ENCODE measurements at regions of chr12 and their contacts with region 1.

Region 1: DNA sequence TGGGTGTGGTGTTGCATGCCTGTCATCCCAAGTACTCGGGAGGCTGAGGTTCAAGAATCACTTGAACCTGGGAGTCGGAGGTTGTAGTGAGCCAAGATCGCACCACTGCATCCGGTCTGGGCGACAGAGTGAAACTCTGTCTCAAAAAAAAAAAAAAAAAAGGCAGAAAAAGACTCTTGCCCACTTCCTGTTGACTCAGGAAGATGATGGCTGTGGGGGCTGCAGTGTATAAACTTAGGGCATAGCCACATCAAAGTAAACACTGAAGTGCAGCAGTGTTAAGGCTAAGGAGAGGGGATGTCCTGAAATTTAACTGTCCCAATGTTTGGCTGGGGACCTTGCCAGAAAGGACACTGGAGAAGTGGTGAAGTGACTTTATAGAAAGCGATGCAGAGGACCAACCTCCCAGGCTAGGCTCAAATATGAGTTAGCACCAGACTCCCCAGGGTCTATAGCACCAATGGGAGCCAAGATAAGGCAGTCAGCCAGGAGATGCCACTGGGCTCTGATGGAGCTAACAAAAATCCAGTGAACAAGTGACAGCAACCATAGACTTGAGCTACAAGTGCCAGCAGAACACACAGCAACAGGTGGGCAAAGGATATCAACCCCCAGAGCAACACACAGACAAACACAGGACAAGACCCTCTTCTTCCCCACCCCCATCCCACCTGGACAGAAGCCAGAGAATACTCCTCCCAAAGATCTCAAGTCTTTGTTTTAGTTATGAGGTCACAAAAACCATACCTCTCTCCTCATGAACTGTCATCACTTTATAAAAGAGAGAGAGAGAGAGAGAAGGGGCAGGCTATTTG is 28.0 kb downstream of the NELL2 start:
- DNase-seq: peak; percentile 79 to 88 (median 82)
- H3K4me3 ChIP-seq: peak overlapping the region in 1 of 2 donors; percentile 46
- H3K4me3 Mint-ChIP-seq: peak overlapping the region; percentile 67 to 86 (median 78)
- H3K27ac ChIP-seq: peak overlapping the region; percentile 62
- H3K27ac Mint-ChIP-seq: peak overlapping the region; percentile 92 to 100 (median 96)
- H3K4me1 ChIP-seq: peaks cover 88% of the 10 kb centered on the region
- H3K4me1 Mint-ChIP-seq: peaks cover 37 to 90% (median 59%) of the 10 kb centered on the region in 4 donors
- H3K27me3 ChIP-seq: no peaks in the 10 kb centered on the region
- H3K27me3 Mint-ChIP-seq: no peaks in the 10 kb centered on the region

Region 2: DNA sequence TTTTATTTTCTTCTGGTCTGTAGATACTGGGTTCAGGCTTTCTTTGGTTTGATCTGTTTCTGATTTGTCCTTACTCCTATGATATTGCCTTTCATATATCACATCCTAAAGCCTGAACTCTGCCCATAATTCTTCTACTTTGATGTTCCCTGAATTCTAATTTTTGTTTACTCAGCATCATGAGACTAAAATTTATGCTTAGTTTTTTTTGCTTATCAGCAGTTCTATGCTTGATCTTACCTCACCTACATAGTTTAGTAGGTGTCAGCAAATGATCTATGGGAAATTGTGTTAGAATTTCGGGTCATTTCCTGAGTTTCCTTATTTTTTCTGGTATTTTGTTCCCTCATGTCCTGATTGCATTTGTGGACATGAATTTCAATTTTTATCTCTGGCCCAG is 918.1 kb before region 1 on chr12:
- CTCF ChIA-PET with region 1: no interaction called
- POLR2A ChIA-PET with region 1: no interaction called
- intact Hi-C with region 1: no loop called
- DNase-seq: no peak
- H3K4me3 ChIP-seq: no peak overlapping the region
- H3K4me3 Mint-ChIP-seq: no peak overlapping the region
- H3K27ac ChIP-seq: no peak overlapping the region
- H3K27ac Mint-ChIP-seq: no peak overlapping the region
- H3K4me1 ChIP-seq: no peaks in the 10 kb centered on the region
- H3K4me1 Mint-ChIP-seq: no peaks in the 10 kb centered on the region
- H3K27me3 ChIP-seq: no peaks in the 10 kb centered on the region
- H3K27me3 Mint-ChIP-seq: no peaks in the 10 kb centered on the region

Region 3: GRCh38 chr12:44817687-44818086 is 30.4 kb before region 1 on chr12:
- CTCF ChIA-PET with region 1: interaction called, 14 read pairs
- POLR2A ChIA-PET with region 1: interaction called, 10 read pairs
- intact Hi-C with region 1: loop called (anchors 1 kb)
- DNase-seq: no peak
- H3K4me3 ChIP-seq: no peak overlapping the region
- H3K4me3 Mint-ChIP-seq: peak overlapping the region in 2 of 8 donors; percentile 6 to 8
- H3K27ac ChIP-seq: no peak overlapping the region
- H3K27ac Mint-ChIP-seq: peak overlapping the region in 5 of 7 donors; percentile 2 to 71 (median 28)
- H3K4me1 ChIP-seq: peaks cover 49% of the 10 kb centered on the region
- H3K4me1 Mint-ChIP-seq: peaks cover 15 to 76% (median 56%) of the 10 kb centered on the region in 4 donors
- H3K27me3 ChIP-seq: no peaks in the 10 kb centered on the region
- H3K27me3 Mint-ChIP-seq: no peaks in the 10 kb centered on the region

Region 4: GRCh38 chr12:44827832-44828438 is 20.2 kb before region 1 on chr12:
- CTCF ChIA-PET with region 1: interaction called, 15 read pairs
- POLR2A ChIA-PET with region 1: interaction called, 49 read pairs
- intact Hi-C with region 1: loop called (anchors 2 kb)
- DNase-seq: peak in 4 of 5 donors; percentile 65 to 80 (median 72)
- H3K4me3 ChIP-seq: peak overlapping the region; percentile 5 to 15
- H3K4me3 Mint-ChIP-seq: peak overlapping the region; percentile 64 to 85 (median 80)
- H3K27ac ChIP-seq: peak overlapping the region; percentile 44
- H3K27ac Mint-ChIP-seq: peak overlapping the region; percentile 81 to 96 (median 92)
- H3K4me1 ChIP-seq: peaks cover 55% of the 10 kb centered on the region
- H3K4me1 Mint-ChIP-seq: peaks cover 27 to 61% (median 46%) of the 10 kb centered on the region in 4 donors
- H3K27me3 ChIP-seq: no peaks in the 10 kb centered on the region
- H3K27me3 Mint-ChIP-seq: no peaks in the 10 kb centered on the region

Region 5: GRCh38 chr12:44835641-44836379 is 12.3 kb before region 1 on chr12:
- CTCF ChIA-PET with region 1: interaction called, 3 read pairs
- POLR2A ChIA-PET with region 1: interaction called, 49 read pairs
- intact Hi-C with region 1: loop called (anchors 1 kb)
- DNase-seq: peak in 2 of 5 donors; percentile 5 to 71
- H3K4me3 ChIP-seq: no peak overlapping the region
- H3K4me3 Mint-ChIP-seq: peak overlapping the region in 7 of 8 donors; percentile 1 to 74 (median 60)
- H3K27ac ChIP-seq: peak overlapping the region; percentile 3
- H3K27ac Mint-ChIP-seq: peak overlapping the region; percentile 60 to 88 (median 73)
- H3K4me1 ChIP-seq: peaks cover 52% of the 10 kb centered on the region
- H3K4me1 Mint-ChIP-seq: peaks cover 39 to 89% (median 61%) of the 10 kb centered on the region in 4 donors
- H3K27me3 ChIP-seq: no peaks in the 10 kb centered on the region
- H3K27me3 Mint-ChIP-seq: no peaks in the 10 kb centered on the region

Region 6: GRCh38 chr12:44863867-44864266 is 15.8 kb after region 1 on chr12:
- CTCF ChIA-PET with region 1: interaction called, 3 read pairs
- POLR2A ChIA-PET with region 1: interaction called, 45 read pairs
- intact Hi-C with region 1: loop called (anchors 1 kb)
- DNase-seq: peak in 4 of 5 donors; percentile 58 to 68 (median 66)
- H3K4me3 ChIP-seq: no peak overlapping the region
- H3K4me3 Mint-ChIP-seq: peak overlapping the region in 7 of 8 donors; percentile 0 to 71 (median 52)
- H3K27ac ChIP-seq: no peak overlapping the region
- H3K27ac Mint-ChIP-seq: peak overlapping the region in 6 of 7 donors; percentile 7 to 84 (median 61)
- H3K4me1 ChIP-seq: peaks cover 40% of the 10 kb centered on the region
- H3K4me1 Mint-ChIP-seq: peaks cover 16 to 68% (median 33%) of the 10 kb centered on the region in 4 donors
- H3K27me3 ChIP-seq: no peaks in the 10 kb centered on the region
- H3K27me3 Mint-ChIP-seq: no peaks in the 10 kb centered on the region

Region 7: GRCh38 chr12:45244561-45245343 is 396.7 kb after region 1 on chr12:
- CTCF ChIA-PET with region 1: no interaction called
- POLR2A ChIA-PET with region 1: no interaction called
- intact Hi-C with region 1: no loop called
- DNase-seq: peak in 3 of 5 donors; percentile 13 to 22 (median 20)
- H3K4me3 ChIP-seq: peak overlapping the region in 1 of 2 donors; percentile 42
- H3K4me3 Mint-ChIP-seq: peak overlapping the region; percentile 54 to 84 (median 72)
- H3K27ac ChIP-seq: peak overlapping the region; percentile 2
- H3K27ac Mint-ChIP-seq: peak overlapping the region in 6 of 7 donors; percentile 30 to 87 (median 66)
- H3K4me1 ChIP-seq: peaks cover 22% of the 10 kb centered on the region
- H3K4me1 Mint-ChIP-seq: peaks cover 29 to 67% (median 48%) of the 10 kb centered on the region in 4 donors
- H3K27me3 ChIP-seq: no peaks in the 10 kb centered on the region
- H3K27me3 Mint-ChIP-seq: no peaks in the 10 kb centered on the region

Region 8: DNA sequence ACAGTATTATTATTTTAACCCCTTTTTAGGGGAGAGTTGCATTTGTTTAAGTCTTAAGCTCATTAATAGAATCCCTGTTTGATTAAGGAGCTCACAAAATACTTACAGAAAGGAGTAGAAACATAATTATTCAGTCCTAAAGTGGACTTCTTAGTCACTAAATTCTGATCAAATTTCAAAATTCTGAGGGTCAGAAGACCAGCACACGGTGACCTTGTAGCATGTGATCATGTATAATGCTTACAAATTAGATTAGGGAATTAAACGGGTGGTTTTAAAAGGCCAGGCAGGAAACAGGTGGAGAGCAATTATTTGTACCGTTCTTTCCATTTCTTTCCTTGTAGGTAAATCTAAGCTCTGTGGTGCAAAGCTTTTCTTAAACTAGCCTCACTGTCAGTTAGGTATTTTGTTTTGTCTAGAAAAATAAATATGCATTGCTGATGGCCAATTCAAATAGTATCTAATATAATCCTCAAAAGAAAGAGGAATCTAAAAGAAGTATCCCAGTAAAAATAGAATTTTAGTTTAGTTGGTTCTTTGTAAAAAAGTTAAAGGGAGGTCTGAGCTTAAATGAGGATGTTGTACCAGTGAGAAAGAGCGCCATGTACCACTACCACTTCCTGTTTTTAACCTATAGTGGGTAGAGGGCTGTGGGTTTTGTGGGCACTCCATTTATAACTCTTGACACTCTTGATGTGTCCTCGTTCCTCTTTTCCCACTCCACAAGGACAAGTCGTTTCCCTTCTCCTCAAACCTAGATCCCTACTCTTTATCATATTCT is 1369.6 kb after region 1 on chr12:
- CTCF ChIA-PET with region 1: no interaction called
- POLR2A ChIA-PET with region 1: no interaction called
- intact Hi-C with region 1: loop called (anchors 5 kb)
- DNase-seq: peak; percentile 76 to 85 (median 81)
- H3K4me3 ChIP-seq: peak overlapping the region; percentile 42 to 56
- H3K4me3 Mint-ChIP-seq: peak overlapping the region; percentile 78 to 90 (median 84)
- H3K27ac ChIP-seq: peak overlapping the region; percentile 87
- H3K27ac Mint-ChIP-seq: peak overlapping the region; percentile 96 to 100 (median 98)
- H3K4me1 ChIP-seq: peaks cover 99% of the 10 kb centered on the region
- H3K4me1 Mint-ChIP-seq: peaks cover 88 to 98% (median 93%) of the 10 kb centered on the region in 4 donors
- H3K27me3 ChIP-seq: no peaks in the 10 kb centered on the region
- H3K27me3 Mint-ChIP-seq: no peaks in the 10 kb centered on the region

Measured in CD4-positive, alpha-beta memory T cell (primary cell).